ENCODE measurements at regions of chr4 and their contacts with region 1.

Region 1: GRCh38 chr4:150297861-150298474 is 219.7 kb downstream of the DCLK2 start:
- DNase-seq: peak; percentile 32
- CTCF ChIP-seq: peak; percentile 41

Region 2: DNA sequence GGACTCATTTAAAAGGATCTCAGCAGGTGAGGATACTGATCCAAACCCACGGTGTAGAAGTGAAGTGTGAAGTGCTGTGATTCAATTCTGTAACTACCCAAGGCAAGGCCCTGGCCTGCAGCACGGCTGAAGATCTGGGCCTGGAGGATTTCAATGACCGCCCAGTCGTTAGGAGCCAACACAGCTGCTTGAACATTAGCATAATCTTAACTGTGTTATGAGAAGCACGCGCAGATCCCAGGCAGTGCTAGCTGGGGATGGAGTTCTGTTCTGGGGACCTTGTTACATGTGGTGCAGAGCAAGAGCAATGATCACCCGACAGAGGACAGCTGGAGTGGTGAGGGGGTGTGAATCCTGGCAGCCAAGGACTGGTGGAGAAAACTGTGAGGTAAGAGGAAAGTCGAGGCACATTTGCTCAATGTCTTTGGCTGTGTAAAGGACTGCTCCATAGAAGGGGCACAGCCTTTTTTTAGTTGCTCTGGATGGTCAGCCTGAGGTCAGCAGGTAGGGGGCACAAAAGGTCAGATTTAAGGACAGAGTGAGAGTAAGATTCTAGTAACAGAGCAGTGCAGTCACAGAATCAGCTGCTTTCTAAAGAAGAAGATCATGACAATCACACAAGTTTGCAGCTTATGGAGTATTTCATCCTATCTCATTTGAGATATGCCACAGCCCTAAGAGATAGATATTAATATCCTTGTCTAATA is 38.0 kb before region 1 on chr4:
- CTCF ChIA-PET with region 1: no interaction called
- POLR2A ChIA-PET with region 1: no interaction called
- DNase-seq: no peak
- CTCF ChIP-seq: no peak

Region 3: GRCh38 chr4:150310159-150310895 is 12.4 kb after region 1 on chr4:
- CTCF ChIA-PET with region 1: interaction called, 22 read pairs
- POLR2A ChIA-PET with region 1: no interaction called
- DNase-seq: no peak
- CTCF ChIP-seq: no peak

Region 4: GRCh38 chr4:150325872-150326271 is 27.9 kb after region 1 on chr4:
- CTCF ChIA-PET with region 1: no interaction called
- POLR2A ChIA-PET with region 1: no interaction called
- DNase-seq: peak; percentile 17
- CTCF ChIP-seq: no peak

Region 5: GRCh38 chr4:150855981-150856510 is 558.1 kb after region 1 on chr4:
- CTCF ChIA-PET with region 1: interaction called, 10 read pairs
- POLR2A ChIA-PET with region 1: no interaction called
- DNase-seq: no peak
- CTCF ChIP-seq: no peak